ENCODE measurements at regions of chr7 and their contacts with region 1.

Region 1: GRCh38 chr7:157138424-157139110 is at the start of gene UBE3C:
- DNase-seq: peak; percentile 86
- H3K4me3 ChIP-seq: peak within 1 kb of the TSS; percentile 81 to 99 (median 86)
- H3K27ac ChIP-seq: peak within 1 kb of the TSS; percentile 80
- H3K4me1 ChIP-seq: peaks cover 22% of the 10 kb centered on the region
- H3K27me3 ChIP-seq: no peaks in the 10 kb centered on the region
- CTCF ChIP-seq: no peak
- total RNA-seq, gene UBE3C: 108 to 109 TPM

Region 2: GRCh38 chr7:155778349-155778748 is 1360.2 kb before region 1 on chr7:
- CTCF ChIA-PET with region 1: interaction called, 14 read pairs
- dilution Hi-C with region 1: no loop called
- in situ Hi-C with region 1: no loop called
- intact Hi-C with region 1: no loop called
- DNase-seq: no peak
- H3K4me3 ChIP-seq: no peak overlapping the region
- H3K27ac ChIP-seq: no peak overlapping the region
- H3K4me1 ChIP-seq: no peaks in the 10 kb centered on the region
- H3K27me3 ChIP-seq: no peaks in the 10 kb centered on the region
- CTCF ChIP-seq: no peak

Region 3: GRCh38 chr7:156949541-156950380 is 188.8 kb before region 1 on chr7 and contains the start of gene NOM1:
- CTCF ChIA-PET with region 1: no interaction called
- dilution Hi-C with region 1: no loop called
- in situ Hi-C with region 1: no loop called
- intact Hi-C with region 1: loop called (anchors 1 kb)
- DNase-seq: peak; percentile 79
- H3K4me3 ChIP-seq: peak within 1 kb of the TSS; percentile 77 to 95 (median 88)
- H3K27ac ChIP-seq: peak within 1 kb of the TSS; percentile 69
- H3K4me1 ChIP-seq: peaks cover 21% of the 10 kb centered on the region
- H3K27me3 ChIP-seq: no peaks in the 10 kb centered on the region
- CTCF ChIP-seq: peak; percentile 64 to 66
- total RNA-seq, gene NOM1: 13.5 to 30.2 TPM

Region 4: GRCh38 chr7:157010588-157011332 is 127.8 kb before region 1 on chr7 and contains the start of gene MNX1:
- CTCF ChIA-PET with region 1: no interaction called
- dilution Hi-C with region 1: no loop called
- in situ Hi-C with region 1: no loop called
- intact Hi-C with region 1: loop called (anchors 1 kb)
- DNase-seq: peak; percentile 83
- H3K4me3 ChIP-seq: peak within 1 kb of the TSS; percentile 56 to 86 (median 64)
- H3K27ac ChIP-seq: no peak within 1 kb of the TSS
- H3K4me1 ChIP-seq: peaks cover 19% of the 10 kb centered on the region
- H3K27me3 ChIP-seq: no peaks in the 10 kb centered on the region
- CTCF ChIP-seq: no peak
- total RNA-seq, gene MNX1: 0.50 to 5.1 TPM

Region 5: GRCh38 chr7:157046681-157047080 is 91.9 kb before region 1 on chr7:
- CTCF ChIA-PET with region 1: no interaction called
- dilution Hi-C with region 1: no loop called
- in situ Hi-C with region 1: loop called in 1 of 2 experiments (anchors 10 kb)
- intact Hi-C with region 1: no loop called
- DNase-seq: peak; percentile 99
- H3K4me3 ChIP-seq: no peak overlapping the region
- H3K27ac ChIP-seq: peak overlapping the region; percentile 58
- H3K4me1 ChIP-seq: peaks cover 14% of the 10 kb centered on the region
- H3K27me3 ChIP-seq: no peaks in the 10 kb centered on the region
- CTCF ChIP-seq: no peak

Region 6: DNA sequence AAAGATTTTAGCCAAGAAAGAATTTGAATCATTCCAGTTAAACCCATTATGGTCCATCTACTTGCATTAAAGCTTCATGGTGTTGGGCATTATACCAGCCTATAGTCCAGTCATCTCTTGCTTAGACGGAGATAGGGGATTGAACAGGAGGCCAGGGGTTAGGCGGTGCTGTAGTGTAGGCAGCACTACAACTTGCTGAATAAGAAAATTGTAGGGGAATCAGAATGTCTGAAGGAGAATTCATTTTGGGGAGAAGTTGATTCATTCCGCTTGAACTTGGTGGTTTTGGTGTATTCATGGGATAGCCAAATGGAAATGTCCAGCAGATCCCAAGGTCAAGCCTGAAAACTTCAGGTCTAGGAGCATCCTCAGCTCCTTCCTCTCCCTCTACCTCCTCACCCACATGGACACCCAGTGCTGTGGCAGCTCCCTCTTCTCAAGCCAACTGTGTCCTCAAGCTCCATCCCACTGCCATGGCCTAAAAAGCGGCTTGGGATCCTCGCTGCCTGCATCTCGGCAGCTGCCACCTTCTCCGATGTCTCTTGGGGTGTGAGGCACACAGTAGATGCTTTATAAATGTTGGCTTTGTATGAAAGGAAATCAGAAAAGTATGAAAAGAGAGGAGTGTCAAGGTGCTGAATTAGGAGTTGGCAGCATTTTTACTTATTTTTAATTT is 64.5 kb before region 1 on chr7:
- CTCF ChIA-PET with region 1: no interaction called
- dilution Hi-C with region 1: no loop called
- in situ Hi-C with region 1: no loop called
- intact Hi-C with region 1: no loop called
- DNase-seq: no peak
- H3K4me3 ChIP-seq: no peak overlapping the region
- H3K27ac ChIP-seq: no peak overlapping the region
- H3K4me1 ChIP-seq: peaks cover 4% of the 10 kb centered on the region
- H3K27me3 ChIP-seq: no peaks in the 10 kb centered on the region
- CTCF ChIP-seq: no peak

Region 7: DNA sequence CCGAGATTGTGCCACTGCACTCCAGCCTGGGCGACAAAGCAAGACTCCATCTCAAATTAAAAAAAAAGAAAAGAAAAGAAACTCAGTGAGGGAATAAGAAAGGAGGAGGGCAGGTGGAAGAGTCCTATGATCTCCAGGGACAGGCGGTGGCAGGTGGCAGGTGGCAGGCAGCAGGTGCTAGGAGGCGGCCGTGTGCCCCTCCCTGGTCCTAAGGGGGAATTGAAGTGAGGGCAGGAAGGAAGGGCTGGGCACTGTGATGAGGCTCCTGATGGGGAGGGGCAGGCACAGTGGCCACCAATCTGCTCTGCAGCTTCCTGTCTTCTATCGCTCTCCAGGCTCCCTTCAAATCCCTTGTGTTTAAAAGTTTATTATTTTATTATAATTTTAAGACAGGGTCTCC is 41.0 kb before region 1 on chr7:
- CTCF ChIA-PET with region 1: no interaction called
- dilution Hi-C with region 1: no loop called
- in situ Hi-C with region 1: no loop called
- intact Hi-C with region 1: no loop called
- DNase-seq: no peak
- H3K4me3 ChIP-seq: no peak overlapping the region
- H3K27ac ChIP-seq: no peak overlapping the region
- H3K4me1 ChIP-seq: no peaks in the 10 kb centered on the region
- H3K27me3 ChIP-seq: no peaks in the 10 kb centered on the region
- CTCF ChIP-seq: no peak

Measured in mammary epithelial cell (primary cell).